A549 (cell line): ENCODE measurements at regions of chr20 and their contacts with region 1.

Region 1: DNA sequence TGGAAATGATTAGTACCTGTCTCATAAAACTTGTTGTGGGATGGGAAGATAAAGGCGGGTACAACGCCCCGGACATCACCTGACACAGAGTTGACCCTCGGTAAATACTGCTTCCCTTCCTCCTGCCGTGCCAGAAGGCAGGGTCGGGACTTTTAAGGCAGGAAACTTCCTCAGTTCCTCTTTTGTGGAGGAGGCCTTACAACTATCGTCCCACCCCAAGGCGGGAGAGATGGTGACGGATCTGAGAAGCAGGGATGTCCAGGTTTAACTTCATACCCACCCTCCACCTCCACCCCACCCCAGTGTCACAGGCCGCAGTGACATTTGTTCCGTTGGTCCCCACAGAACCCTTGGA is 555 bp downstream of the DNTTIP1 start:
- DNase-seq: no peak
- ATAC-seq: no peak; a peak in 1 of 6 replicates
- H3K4me3 ChIP-seq: peak overlapping the region; percentile 92
- H3K27ac ChIP-seq: peak overlapping the region; percentile 89 to 96
- H3K4me1 ChIP-seq: 0 out of 3 replicates have a peak, but pooled peaks cover 5% of the 10 kb centered on the region
- CTCF ChIP-seq: no peak
- EP300 ChIP-seq: no peak
- POLR2A ChIP-seq: no peak
- RAD21 ChIP-seq: no peak

Region 2: DNA sequence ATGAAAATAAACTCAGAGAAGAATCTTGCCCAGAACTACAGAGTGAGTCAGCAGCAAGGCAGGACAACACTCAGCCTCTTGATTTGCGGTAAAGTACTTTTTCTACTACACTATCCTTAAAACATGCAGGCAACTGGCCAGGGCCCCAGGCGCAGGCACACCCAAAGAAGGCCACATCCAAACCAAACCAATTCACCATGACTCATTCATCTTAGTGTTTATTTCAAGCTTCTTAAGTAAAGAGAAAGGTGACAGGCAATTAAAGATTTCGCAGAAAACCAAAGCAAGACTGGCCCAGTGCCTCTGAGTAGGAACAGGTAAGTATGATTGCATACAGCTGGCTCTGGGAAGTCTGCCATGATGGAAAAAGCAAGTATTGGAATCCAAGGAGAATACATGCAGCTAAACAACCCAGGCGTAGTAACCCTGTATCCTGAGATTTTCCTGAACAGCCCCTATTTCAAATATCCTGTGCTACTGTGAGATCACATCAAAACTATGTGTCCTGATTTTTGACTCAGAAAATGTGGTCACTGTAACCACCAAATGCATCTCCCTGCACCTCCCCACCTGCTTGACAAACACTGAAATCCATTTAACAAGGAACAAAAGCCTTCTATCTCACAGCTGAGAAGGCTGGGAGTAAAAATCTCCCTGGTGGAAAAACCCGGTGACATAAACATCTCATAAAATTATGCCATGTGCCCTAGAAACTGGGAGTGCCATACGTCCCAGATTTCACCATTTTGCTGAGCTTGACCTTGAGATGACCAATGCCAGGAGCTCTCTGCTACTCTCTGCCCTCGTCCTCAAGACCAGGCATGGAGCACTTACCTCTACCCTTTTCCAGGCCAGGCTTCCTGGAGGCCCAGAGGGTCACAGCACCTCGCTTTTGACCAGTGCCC is 13.0 kb before region 1 on chr20:
- CTCF ChIA-PET with region 1: interaction called, 10 read pairs
- POLR2A ChIA-PET with region 1: interaction called, 5 read pairs
- DNase-seq: peak; percentile 87 to 94
- ATAC-seq: peak; percentile 92
- H3K4me3 ChIP-seq: no peak overlapping the region
- H3K27ac ChIP-seq: peak overlapping the region; percentile 34 to 63; a peak in 5 of 6 replicates
- H3K4me1 ChIP-seq: peaks cover 47% of the 10 kb centered on the region
- CTCF ChIP-seq: no peak
- EP300 ChIP-seq: peak in 1 of 2 experiments; percentile 52; a peak in 1 of 5 replicates
- POLR2A ChIP-seq: no peak
- RAD21 ChIP-seq: no peak